H1 (cell line): ENCODE measurements at regions of chr3 and their contacts with region 1.

Region 1: DNA sequence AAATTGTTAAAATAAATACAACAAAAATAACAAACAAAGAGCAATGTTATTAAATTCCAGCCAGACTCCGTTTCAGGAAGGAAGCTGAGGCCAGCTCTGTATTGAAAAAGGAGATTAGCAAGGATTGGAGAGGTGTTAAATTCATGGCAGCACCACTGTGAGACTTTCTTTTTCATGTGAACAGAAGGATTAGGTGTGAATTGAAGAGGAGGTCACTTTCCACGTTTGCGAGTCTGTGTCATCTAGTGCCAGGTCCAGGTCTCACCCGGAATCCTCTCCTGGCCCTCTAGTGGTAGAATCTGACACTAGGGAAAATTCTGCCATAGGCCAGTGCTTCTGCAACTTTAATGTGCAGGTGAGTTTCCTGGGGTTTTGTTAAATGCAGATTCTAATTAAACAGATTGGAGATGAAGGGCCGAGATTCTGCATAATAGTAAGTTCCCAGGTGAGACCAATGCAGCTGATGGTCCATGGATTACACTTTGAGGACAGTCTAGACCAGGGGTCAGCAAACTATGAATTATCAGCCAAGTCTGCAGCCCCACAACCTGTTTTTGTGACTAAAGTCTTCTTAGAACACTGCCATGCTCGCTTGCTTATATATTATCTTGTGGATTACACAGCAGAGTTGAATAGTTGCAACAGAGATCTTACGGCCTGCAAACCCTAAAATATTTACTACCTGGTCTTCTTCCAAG is 9.2 kb upstream of the SLC6A1 start:
- DNase-seq: peak in 1 of 2 experiments; percentile 60
- H3K4me3 ChIP-seq: no peak overlapping the region
- H3K27ac ChIP-seq: no peak overlapping the region
- H3K4me1 ChIP-seq: peaks cover 0 to 6% (median 3%) of the 10 kb centered on the region in 4 experiments; a peak in 5 of 7 replicates
- H3K27me3 ChIP-seq: no peaks in the 10 kb centered on the region
- CTCF ChIP-seq: peak; percentile 68 to 83 (median 76)
- EP300 ChIP-seq: no peak
- POLR2A ChIP-seq: no peak
- RAD21 ChIP-seq: peak; percentile 52 to 64

Region 2: DNA sequence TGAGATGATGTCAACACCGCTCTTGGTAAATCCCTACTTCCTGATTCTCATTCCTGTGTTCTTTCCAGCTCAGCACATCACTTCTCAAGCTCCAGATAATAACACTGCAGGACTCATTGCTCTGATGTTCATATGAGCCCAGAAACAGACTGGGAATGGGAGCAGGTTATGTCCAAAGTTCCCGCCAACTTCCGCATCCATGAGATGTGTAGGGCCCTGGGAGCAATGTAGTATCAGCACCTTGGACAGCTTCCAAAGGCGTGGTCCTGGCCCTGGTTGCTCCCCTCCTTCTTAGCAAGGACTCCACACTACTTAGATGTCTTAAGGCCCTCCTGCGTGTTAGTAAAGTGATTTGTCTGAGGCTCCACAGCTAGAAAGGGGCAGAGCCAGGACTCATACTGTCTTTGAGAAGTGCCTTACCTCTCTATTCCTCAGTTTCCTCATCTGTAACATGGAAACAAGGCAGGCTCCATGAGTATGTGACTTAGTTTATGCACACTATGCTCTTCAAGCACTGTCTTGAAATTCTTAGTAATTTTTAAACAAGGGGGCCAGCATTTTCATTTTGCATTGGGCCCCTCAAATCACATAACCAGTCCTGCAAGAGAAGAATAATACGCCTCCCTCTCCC is 18.7 kb before region 1 on chr3:
- CTCF ChIA-PET with region 1: interaction called, 207 read pairs
- POLR2A ChIA-PET with region 1: interaction called, 5 read pairs
- DNase-seq: peak in 1 of 2 experiments; percentile 70
- H3K4me3 ChIP-seq: no peak overlapping the region
- H3K27ac ChIP-seq: no peak overlapping the region
- H3K4me1 ChIP-seq: peaks cover 0 to 9% (median 3%) of the 10 kb centered on the region in 4 experiments; a peak in 5 of 7 replicates
- H3K27me3 ChIP-seq: no peaks in the 10 kb centered on the region; a peak in 1 of 7 replicates
- CTCF ChIP-seq: no peak
- EP300 ChIP-seq: no peak
- POLR2A ChIP-seq: no peak
- RAD21 ChIP-seq: no peak

Region 3: GRCh38 chr3:10970306-10970960 is 12.9 kb before region 1 on chr3:
- CTCF ChIA-PET with region 1: interaction called, 59 read pairs
- POLR2A ChIA-PET with region 1: interaction called, 5 read pairs
- DNase-seq: no peak
- H3K4me3 ChIP-seq: no peak overlapping the region
- H3K27ac ChIP-seq: no peak overlapping the region
- H3K4me1 ChIP-seq: peaks cover 5 to 16% (median 11%) of the 10 kb centered on the region in 4 experiments
- H3K27me3 ChIP-seq: no peaks in the 10 kb centered on the region; a peak in 2 of 7 replicates
- CTCF ChIP-seq: no peak
- EP300 ChIP-seq: no peak
- POLR2A ChIP-seq: no peak
- RAD21 ChIP-seq: no peak

Region 4: GRCh38 chr3:11001020-11001656 is 17.8 kb after region 1 on chr3:
- CTCF ChIA-PET with region 1: interaction called, 100 read pairs
- POLR2A ChIA-PET with region 1: no interaction called
- DNase-seq: no peak
- H3K4me3 ChIP-seq: no peak overlapping the region
- H3K27ac ChIP-seq: no peak overlapping the region
- H3K4me1 ChIP-seq: peaks cover 0 to 6% (median 0%) of the 10 kb centered on the region in 4 experiments; a peak in 2 of 7 replicates
- H3K27me3 ChIP-seq: no peaks in the 10 kb centered on the region; a peak in 1 of 7 replicates
- CTCF ChIP-seq: no peak
- EP300 ChIP-seq: no peak
- POLR2A ChIP-seq: no peak
- RAD21 ChIP-seq: no peak